Mammary epithelial cell (primary cell): ENCODE measurements at regions of chr7 and their contacts with region 1.

Region 1: DNA sequence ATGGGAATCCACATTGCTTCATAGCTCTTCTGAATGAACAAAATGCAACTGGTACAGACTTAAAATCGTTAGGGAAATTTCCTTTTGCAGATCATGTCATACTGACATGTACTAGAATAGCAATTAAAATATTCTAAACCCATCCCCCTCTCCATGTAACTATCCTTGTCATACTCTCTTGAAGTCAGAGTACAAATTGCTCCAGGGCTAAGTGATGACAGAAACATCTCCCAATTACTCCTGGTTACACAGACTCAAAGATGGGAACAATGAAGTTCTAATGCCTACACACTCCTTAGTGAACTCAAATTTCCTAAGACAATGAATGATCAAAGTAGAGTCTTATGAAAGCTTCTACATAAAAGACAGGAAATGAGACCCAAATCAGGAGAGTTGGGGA is 87.2 kb downstream of the PDE1C start:
- DNase-seq: peak; percentile 21
- H3K4me3 ChIP-seq: no peak overlapping the region
- H3K27ac ChIP-seq: peak overlapping the region; percentile 13
- H3K4me1 ChIP-seq: peaks cover 13% of the 10 kb centered on the region
- H3K27me3 ChIP-seq: no peaks in the 10 kb centered on the region
- CTCF ChIP-seq: no peak

Region 2: DNA sequence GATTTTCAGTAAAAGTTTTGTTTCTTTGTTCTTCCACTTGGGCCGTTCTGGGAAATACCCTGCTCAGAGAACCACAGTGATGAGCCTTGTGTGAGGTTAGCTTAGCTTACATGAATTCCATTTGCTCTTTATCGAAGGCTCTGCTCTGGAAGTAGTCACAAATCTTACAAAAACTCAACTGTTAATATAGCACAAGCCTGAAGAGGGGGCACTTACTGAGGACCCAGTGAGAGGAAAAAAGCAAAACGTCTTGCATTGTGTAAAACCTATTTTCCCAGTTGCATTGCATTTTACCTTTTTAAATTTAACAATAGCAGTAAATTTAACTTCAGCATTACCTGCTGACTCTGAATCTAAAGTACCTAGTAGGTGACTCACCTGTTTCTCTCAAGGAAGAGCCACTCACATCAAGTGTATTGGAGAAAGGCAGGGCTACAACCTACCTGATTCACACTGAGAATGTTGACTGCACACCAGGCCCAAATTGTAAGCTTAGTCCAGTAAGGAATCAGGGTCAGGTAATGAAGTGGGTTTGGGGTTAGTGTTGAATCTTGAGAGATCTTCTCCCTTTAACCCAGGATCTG is 253.7 kb before region 1 on chr7:
- CTCF ChIA-PET with region 1: no interaction called
- dilution Hi-C with region 1: no loop called
- in situ Hi-C with region 1: no loop called
- intact Hi-C with region 1: no loop called
- DNase-seq: peak; percentile 57
- H3K4me3 ChIP-seq: no peak overlapping the region
- H3K27ac ChIP-seq: no peak overlapping the region
- H3K4me1 ChIP-seq: peaks cover 12% of the 10 kb centered on the region
- H3K27me3 ChIP-seq: no peaks in the 10 kb centered on the region
- CTCF ChIP-seq: peak in 1 of 2 donors; percentile 3

Region 3: DNA sequence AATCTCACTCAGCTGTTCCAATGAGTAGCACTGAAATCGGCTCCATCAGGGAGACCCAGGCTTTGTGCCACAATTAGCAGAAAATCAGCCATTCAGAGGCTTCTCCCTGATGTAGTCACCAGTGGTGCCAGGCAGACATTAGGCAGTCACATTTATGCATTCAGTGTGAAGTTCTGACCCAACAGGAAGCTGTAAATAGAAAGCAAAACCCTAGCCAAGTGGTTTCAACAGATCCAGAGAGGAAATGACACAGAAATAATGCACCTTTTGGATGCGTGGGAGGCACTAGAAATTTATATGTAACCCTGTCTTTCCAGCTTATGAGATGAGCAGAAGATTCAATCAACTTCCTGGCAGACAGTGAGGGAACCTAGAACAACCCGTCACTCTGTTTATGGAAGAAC is 99.2 kb before region 1 on chr7:
- CTCF ChIA-PET with region 1: no interaction called
- dilution Hi-C with region 1: no loop called
- in situ Hi-C with region 1: no loop called
- intact Hi-C with region 1: no loop called
- DNase-seq: peak; percentile 91
- H3K4me3 ChIP-seq: peak overlapping the region in 1 of 3 experiments; percentile 4
- H3K27ac ChIP-seq: peak overlapping the region; percentile 81
- H3K4me1 ChIP-seq: peaks cover 27% of the 10 kb centered on the region
- H3K27me3 ChIP-seq: no peaks in the 10 kb centered on the region
- CTCF ChIP-seq: no peak

Region 4: GRCh38 chr7:31919678-31920369 is 63.1 kb before region 1 on chr7:
- CTCF ChIA-PET with region 1: no interaction called
- dilution Hi-C with region 1: loop called (anchors 5 kb)
- in situ Hi-C with region 1: no loop called
- intact Hi-C with region 1: no loop called
- DNase-seq: no peak
- H3K4me3 ChIP-seq: no peak overlapping the region
- H3K27ac ChIP-seq: no peak overlapping the region
- H3K4me1 ChIP-seq: no peaks in the 10 kb centered on the region
- H3K27me3 ChIP-seq: no peaks in the 10 kb centered on the region
- CTCF ChIP-seq: no peak

Region 5: DNA sequence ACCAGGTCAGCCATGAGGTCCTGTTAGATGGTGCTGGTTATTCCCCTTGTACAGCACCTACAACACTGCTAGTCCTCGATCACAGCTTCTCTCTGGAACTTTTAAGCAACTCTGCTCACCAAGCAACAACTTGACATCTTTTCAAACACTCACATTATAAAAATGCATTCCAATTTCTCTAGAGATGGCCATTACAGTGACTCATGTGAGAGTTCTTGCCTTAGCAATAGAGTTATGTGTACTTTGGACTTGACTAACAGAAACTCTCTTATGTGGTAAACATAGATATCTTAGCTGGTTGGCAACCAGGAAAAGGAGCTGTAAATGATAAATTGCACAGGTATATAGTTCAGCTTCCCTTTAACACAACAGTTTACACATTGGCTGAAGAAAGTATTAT is 34.9 kb before region 1 on chr7:
- CTCF ChIA-PET with region 1: no interaction called
- dilution Hi-C with region 1: loop called (anchors 5 kb)
- in situ Hi-C with region 1: no loop called
- intact Hi-C with region 1: no loop called
- DNase-seq: peak; percentile 93
- H3K4me3 ChIP-seq: no peak overlapping the region
- H3K27ac ChIP-seq: peak overlapping the region; percentile 89
- H3K4me1 ChIP-seq: peaks cover 28% of the 10 kb centered on the region
- H3K27me3 ChIP-seq: no peaks in the 10 kb centered on the region
- CTCF ChIP-seq: no peak

Region 6: GRCh38 chr7:32051128-32051527 is 68.2 kb after region 1 on chr7:
- CTCF ChIA-PET with region 1: no interaction called
- dilution Hi-C with region 1: loop called (anchors 5 kb)
- in situ Hi-C with region 1: no loop called
- intact Hi-C with region 1: no loop called
- DNase-seq: no peak
- H3K4me3 ChIP-seq: no peak overlapping the region
- H3K27ac ChIP-seq: no peak overlapping the region
- H3K4me1 ChIP-seq: no peaks in the 10 kb centered on the region
- H3K27me3 ChIP-seq: no peaks in the 10 kb centered on the region
- CTCF ChIP-seq: no peak